OCI-LY7 (cell line): ENCODE measurements at regions of chr4 and their contacts with region 1.

Region 1: DNA sequence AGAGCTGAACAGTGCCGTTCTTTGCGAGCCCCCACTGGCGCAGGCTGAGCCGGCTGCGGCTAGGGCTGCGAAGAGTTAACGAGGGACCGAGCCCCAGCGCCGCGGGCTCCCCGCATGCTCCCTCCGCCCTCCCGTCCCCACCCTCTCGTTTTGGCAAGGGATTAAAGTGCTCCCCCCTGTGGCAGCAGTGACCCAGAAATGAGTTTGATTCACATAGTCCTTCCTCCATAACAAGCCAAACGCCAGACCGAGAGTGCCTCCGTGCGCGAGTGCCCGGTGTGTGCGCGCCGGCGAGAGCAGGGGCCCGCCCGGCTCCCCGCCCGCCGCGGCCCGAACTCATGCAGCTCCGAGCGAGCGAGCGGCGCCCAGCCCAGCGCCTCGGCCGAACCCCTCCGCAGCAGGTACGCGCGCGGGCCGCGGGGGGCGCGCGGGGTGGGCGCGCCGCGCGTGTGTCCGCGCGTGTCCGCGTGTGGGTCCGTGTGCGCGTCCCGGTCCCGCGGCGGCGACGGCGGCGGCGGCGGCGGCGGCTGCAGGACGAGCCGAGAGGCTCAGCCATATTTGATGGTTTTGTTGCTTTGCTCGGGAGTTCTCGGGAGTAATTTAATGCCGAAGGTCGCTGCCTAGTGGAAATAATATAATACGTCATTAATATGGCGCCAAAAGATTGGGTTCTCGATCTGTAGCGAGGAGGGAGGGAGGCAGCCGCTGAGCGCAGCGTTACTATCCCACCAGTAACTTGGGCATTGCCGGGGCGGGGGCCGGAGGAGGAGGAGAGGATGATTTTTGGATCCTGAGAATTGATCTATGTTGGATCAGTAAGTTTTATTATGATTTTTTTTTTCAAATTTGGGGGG is at the start of gene JADE1:
- DNase-seq: peak; percentile 94
- H3K4me3 ChIP-seq: peak within 1 kb of the TSS; percentile 79
- H3K27ac ChIP-seq: peak within 1 kb of the TSS; percentile 96
- H3K4me1 ChIP-seq: peaks cover 19% of the 10 kb centered on the region
- CTCF ChIP-seq: peak; percentile 73
- total RNA-seq, gene JADE1: 43.1 and 52.8 TPM in 2 replicates

Region 2: GRCh38 chr4:127965062-127965802 is 844.5 kb before region 1 on chr4 and contains the starts of genes ABHD18 and MFSD8:
- CTCF ChIA-PET with region 1: no interaction called
- POLR2A ChIA-PET with region 1: no interaction called
- intact Hi-C with region 1: loop called (anchors 5 kb)
- DNase-seq: peak; percentile 99
- H3K4me3 ChIP-seq: peak within 1 kb of the TSS; percentile 76
- H3K27ac ChIP-seq: peak within 1 kb of the TSS; percentile 53
- H3K4me1 ChIP-seq: peaks cover 8% of the 10 kb centered on the region
- CTCF ChIP-seq: peak; percentile 43; the same call in 1 of the 2 replicates
- total RNA-seq, gene ABHD18: 8.6 and 10.4 TPM in 2 replicates
- total RNA-seq, gene MFSD8: 15.1 and 15.9 TPM in 2 replicates

Region 3: GRCh38 chr4:128287871-128288688 is 521.6 kb before region 1 on chr4:
- CTCF ChIA-PET with region 1: no interaction called
- POLR2A ChIA-PET with region 1: interaction called, 5 read pairs
- intact Hi-C with region 1: loop called (anchors 1 kb)
- DNase-seq: peak; percentile 99
- H3K4me3 ChIP-seq: peak overlapping the region; percentile 98
- H3K27ac ChIP-seq: peak overlapping the region; percentile 72
- H3K4me1 ChIP-seq: peaks cover 25% of the 10 kb centered on the region
- CTCF ChIP-seq: no peak

Region 4: DNA sequence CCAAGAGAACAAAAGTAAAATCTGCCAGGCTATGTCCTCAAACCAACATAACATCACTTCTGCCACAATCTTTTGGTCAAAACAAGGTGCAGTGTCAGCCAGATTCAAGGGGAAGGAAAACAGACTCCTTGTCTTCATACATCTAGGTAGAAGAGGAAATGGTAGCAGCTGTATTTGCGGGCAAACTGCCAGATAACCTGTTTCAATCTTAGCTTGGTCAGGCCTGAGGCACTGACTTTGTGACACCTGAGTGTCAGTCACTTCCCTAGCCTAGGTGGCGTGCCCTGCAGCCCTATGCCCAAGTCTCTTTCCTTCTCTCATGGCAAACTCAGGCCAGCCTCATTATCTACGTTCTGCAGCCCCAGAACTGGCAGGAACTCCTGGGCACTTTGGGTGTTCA is 146.4 kb before region 1 on chr4:
- CTCF ChIA-PET with region 1: no interaction called
- POLR2A ChIA-PET with region 1: interaction called, 3 read pairs
- intact Hi-C with region 1: loop called (anchors 2 kb)
- DNase-seq: peak; percentile 82
- H3K4me3 ChIP-seq: no peak overlapping the region
- H3K27ac ChIP-seq: peak overlapping the region; percentile 63
- H3K4me1 ChIP-seq: peaks cover 17% of the 10 kb centered on the region
- CTCF ChIP-seq: peak; percentile 37

Region 5: DNA sequence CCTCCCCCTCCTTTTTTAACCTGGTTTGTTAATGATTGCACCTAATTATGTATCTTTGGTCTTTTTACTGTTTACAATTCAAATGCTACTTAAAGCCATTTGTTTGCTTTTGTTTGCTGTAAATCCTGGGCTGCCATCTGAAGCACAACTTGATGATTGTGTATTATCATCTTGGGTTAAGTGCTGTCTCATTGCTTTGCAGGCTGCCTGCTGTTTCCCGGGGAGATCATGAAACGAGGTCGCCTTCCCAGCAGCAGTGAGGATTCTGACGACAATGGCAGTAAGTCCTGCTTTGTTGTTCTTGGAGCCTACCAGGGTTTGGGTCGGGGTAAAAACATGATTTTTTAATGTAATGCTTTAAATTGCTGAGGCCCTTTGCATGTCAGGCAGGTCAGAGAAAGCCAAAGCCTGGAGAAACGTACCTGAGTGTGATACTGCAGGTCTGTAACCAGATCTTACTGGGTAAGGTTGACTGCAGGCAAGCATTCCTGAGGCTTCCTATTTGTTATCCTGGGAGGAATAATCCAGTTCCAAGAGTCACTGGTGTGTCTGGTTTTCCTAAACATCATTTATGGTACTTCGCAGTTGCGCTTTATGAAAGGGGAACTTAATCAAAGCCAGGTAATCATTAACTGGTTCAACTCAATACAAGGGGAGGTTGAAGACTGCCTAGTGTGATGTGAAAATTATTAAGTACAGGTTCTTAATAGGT is 22.0 kb after region 1 on chr4:
- CTCF ChIA-PET with region 1: interaction called, 3 read pairs
- POLR2A ChIA-PET with region 1: interaction called, 62 read pairs
- intact Hi-C with region 1: loop called (anchors 2 kb)
- DNase-seq: no peak
- H3K4me3 ChIP-seq: peak overlapping the region; percentile 41
- H3K27ac ChIP-seq: peak overlapping the region; percentile 84
- H3K4me1 ChIP-seq: peaks cover 63% of the 10 kb centered on the region
- CTCF ChIP-seq: no peak

Region 6: DNA sequence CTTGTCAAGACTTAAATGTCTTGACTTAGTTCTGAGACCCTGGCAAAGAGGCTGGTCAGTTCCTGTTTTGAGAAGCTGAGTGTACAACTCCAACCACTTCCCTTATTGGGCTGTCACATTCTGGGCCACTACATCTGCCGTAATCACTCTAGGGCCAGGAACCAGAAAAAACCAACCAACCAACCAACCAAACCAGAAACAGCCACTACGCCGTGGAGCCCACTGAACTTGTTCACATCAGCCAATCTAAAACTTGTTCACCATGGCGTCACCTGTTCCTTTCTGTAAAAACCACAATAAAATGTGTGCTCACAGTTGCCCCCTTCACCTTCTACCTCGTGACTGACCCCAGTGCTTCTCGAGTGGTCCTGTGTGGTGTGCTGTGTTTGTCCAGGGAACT is 107.1 kb after region 1 on chr4:
- CTCF ChIA-PET with region 1: no interaction called
- POLR2A ChIA-PET with region 1: no interaction called
- intact Hi-C with region 1: no loop called
- DNase-seq: peak; percentile 2
- H3K4me3 ChIP-seq: no peak overlapping the region
- H3K27ac ChIP-seq: no peak overlapping the region
- H3K4me1 ChIP-seq: no peaks in the 10 kb centered on the region
- CTCF ChIP-seq: no peak